Ovary (tissue), 10 donors: ENCODE measurements at regions of chr11 and their contacts with region 1.

Region 1: GRCh38 chr11:842370-843002 is at the starts of genes POLR2L and TSPAN4:
- DNase-seq: peak; percentile 87 to 93 (median 91)
- H3K4me3 ChIP-seq: peak within 1 kb of the TSS; percentile 49
- H3K27ac ChIP-seq: peak within 1 kb of the TSS; percentile 74 to 92
- H3K4me1 ChIP-seq: peaks cover 24% of the 10 kb centered on the region
- H3K27me3 ChIP-seq: no peaks in the 10 kb centered on the region
- CTCF ChIP-seq: peak in 2 of 3 donors; percentile 55 to 68
- EP300 ChIP-seq: no peak
- POLR2A ChIP-seq: peak; percentile 80
- total RNA-seq, gene POLR2L: 26.8 to 89.3 (median 62.7) TPM
- total RNA-seq, gene TSPAN4: 66.6 to 109 (median 89.7) TPM

Region 2: GRCh38 chr11:798093-798713 is 44.3 kb before region 1 on chr11 and contains the start of gene SLC25A22:
- intact Hi-C with region 1: no loop called
- DNase-seq: peak; percentile 71 to 89 (median 82)
- H3K4me3 ChIP-seq: peak within 1 kb of the TSS; percentile 71
- H3K27ac ChIP-seq: peak within 1 kb of the TSS; percentile 34 to 73
- H3K4me1 ChIP-seq: peaks cover 13% of the 10 kb centered on the region
- H3K27me3 ChIP-seq: no peaks in the 10 kb centered on the region
- CTCF ChIP-seq: peak; percentile 64 to 95 (median 94)
- EP300 ChIP-seq: no peak
- POLR2A ChIP-seq: no peak
- total RNA-seq, gene SLC25A22: 6.6 to 23.3 (median 16.7) TPM

Region 3: DNA sequence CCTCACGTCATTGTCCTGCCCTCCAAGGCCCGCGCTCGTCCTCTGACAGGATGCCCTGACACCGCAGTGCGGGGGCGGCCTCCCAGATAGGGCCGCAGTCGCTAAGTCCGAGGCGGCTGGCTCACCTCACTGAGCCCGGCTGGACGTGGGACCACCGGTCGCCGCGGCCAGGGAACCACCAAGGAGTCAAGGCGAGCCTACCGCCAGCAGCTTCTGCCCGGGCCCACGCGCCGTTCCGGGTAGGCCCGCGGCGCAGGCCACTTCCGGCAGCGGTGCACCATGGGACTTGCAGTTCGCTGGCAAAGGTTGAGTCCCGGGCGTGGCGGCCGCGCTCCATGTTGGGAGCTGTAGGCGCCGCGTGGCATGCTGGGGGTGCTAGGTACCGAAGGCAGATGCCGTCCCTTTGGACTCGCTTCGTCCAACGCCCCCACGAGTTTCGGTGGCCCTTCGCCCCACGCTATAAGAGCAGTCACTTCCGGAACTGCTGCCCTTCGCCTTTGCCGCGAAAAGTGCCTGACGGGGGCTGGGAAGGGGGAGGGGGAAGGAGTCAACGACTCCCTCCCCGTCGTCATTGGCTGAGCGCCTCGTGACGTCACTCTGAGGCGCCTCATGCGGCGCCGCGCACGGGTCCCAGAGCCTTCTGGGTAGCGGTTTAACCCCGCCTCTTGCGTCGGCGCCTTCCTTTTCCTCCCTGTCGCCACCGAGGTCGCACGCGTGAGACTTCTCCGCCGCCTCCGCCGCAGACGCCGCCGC is 33.0 kb before region 1 on chr11 and contains the start of gene RPLP2:
- intact Hi-C with region 1: loop called in 1 of 4 experiments (anchors 5 kb)
- DNase-seq: peak; percentile 98 to 99 (median 99)
- H3K4me3 ChIP-seq: peak within 1 kb of the TSS; percentile 83
- H3K27ac ChIP-seq: peak within 1 kb of the TSS; percentile 92 to 95
- H3K4me1 ChIP-seq: peaks cover 12% of the 10 kb centered on the region
- H3K27me3 ChIP-seq: no peaks in the 10 kb centered on the region
- CTCF ChIP-seq: peak in 2 of 3 donors; percentile 19 to 37
- EP300 ChIP-seq: peak; percentile 34
- POLR2A ChIP-seq: peak; percentile 97
- total RNA-seq, gene RPLP2: 901 to 4,238 (median 3,176) TPM

Region 4: GRCh38 chr11:1458340-1459218 is 616.1 kb after region 1 on chr11:
- intact Hi-C with region 1: loop called in 1 of 4 experiments (anchors 10 kb)
- DNase-seq: peak; percentile 85 to 93 (median 86)
- H3K4me3 ChIP-seq: no peak overlapping the region
- H3K27ac ChIP-seq: peak overlapping the region; percentile 80 to 92
- H3K4me1 ChIP-seq: peaks cover 19% of the 10 kb centered on the region
- H3K27me3 ChIP-seq: no peaks in the 10 kb centered on the region
- CTCF ChIP-seq: peak in 2 of 3 donors; percentile 15 to 25
- EP300 ChIP-seq: no peak
- POLR2A ChIP-seq: no peak